ENCODE measurements at regions of chr2 and their contacts with region 1.

Region 1: DNA sequence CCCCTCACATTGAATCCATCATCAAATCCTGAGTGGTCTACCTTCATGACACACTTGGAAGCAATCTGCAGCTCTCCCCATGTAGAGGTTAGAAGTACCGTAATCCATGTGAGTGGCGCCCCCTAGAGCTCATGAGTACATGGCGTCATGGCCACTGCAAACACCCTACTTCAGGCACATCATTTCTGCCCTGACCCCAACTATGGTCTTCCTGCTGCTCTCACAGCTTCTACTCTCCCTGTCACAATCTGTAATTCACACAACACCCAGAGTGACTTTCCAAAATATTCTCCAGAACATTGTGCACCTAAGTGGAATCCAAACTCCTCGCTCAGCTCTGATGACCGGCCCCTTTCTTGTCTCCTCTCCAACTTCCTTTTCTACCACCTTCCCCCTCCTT is 141.9 kb downstream of the ANKRD44 start:
- DNase-seq: peak; percentile 82
- ATAC-seq: peak; percentile 76
- H3K4me3 ChIP-seq: no peak overlapping the region
- H3K4me3 Mint-ChIP-seq: peak overlapping the region; percentile 4
- H3K27ac ChIP-seq: peak overlapping the region; percentile 2 to 60
- H3K27ac Mint-ChIP-seq: peak overlapping the region; percentile 64
- H3K4me1 ChIP-seq: peaks cover 61 to 64% of the 10 kb centered on the region in 2 donors
- H3K4me1 Mint-ChIP-seq: peaks cover 78% of the 10 kb centered on the region
- H3K27me3 ChIP-seq: no peaks in the 10 kb centered on the region
- H3K27me3 Mint-ChIP-seq: no peaks in the 10 kb centered on the region
- CTCF ChIP-seq: peak; percentile 79

Region 2: DNA sequence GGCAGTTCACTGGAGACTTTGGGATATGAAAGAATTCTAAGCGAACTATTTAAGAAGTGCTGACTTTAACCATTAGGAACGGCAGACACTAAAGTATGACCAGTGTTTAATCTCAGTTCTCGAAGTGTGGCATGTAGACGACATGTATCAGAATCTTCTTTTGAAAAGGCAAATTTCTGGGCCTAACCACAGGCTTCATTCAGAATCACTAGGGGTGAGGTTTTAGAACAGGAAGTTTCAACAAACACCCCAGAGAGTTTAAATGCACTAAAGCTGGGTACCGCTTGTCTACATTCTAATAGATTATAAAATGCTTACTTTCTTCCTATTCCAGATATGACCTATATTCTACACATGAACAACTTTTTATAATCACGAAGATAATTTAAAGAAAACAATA is 38.4 kb before region 1 on chr2:
- CTCF ChIA-PET with region 1: interaction called, 21 read pairs
- POLR2A ChIA-PET with region 1: no interaction called
- intact Hi-C with region 1: loop called (anchors 5 kb)
- DNase-seq: peak; percentile 75
- ATAC-seq: peak; percentile 70
- H3K4me3 ChIP-seq: peak overlapping the region in 3 of 5 experiments; percentile 14 to 52 (median 21)
- H3K4me3 Mint-ChIP-seq: peak overlapping the region; percentile 84
- H3K27ac ChIP-seq: peak overlapping the region; percentile 81 to 82
- H3K27ac Mint-ChIP-seq: peak overlapping the region; percentile 96
- H3K4me1 ChIP-seq: peaks cover 66 to 69% of the 10 kb centered on the region in 2 donors
- H3K4me1 Mint-ChIP-seq: peaks cover 69% of the 10 kb centered on the region
- H3K27me3 ChIP-seq: no peaks in the 10 kb centered on the region
- H3K27me3 Mint-ChIP-seq: no peaks in the 10 kb centered on the region
- CTCF ChIP-seq: no peak

Region 3: DNA sequence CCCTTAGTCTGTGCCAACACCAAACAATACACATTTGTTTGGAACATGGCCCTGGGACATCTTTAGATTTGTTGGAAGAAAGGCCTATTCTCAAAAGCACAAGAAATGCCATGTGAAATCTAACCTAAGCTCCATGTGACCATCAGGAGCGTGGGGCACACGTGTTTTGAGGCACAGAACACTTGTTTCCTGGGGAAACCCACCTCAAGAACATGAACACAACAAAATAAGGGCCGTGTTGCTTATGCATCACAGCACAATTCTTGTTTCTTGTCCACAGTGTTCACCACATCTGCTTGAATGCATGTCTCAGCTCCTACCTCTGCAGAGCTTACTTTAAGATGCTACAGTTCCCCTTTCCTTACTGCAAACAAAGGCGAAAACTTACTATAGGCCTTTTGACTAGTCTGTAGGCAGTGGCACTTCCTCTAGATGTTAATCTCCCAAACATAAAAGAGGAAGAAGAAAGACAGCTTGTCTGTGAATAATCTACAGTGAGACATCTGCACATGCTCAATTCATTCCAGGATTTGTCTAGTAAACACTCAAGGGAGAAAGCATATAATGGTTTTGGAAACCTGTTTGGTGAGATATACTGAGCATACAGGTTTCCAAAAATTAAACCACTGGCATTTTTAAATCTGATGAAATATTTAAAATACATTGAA is 23.1 kb before region 1 on chr2:
- CTCF ChIA-PET with region 1: interaction called, 20 read pairs
- POLR2A ChIA-PET with region 1: no interaction called
- intact Hi-C with region 1: no loop called
- DNase-seq: peak; percentile 93
- ATAC-seq: peak; percentile 88
- H3K4me3 ChIP-seq: no peak overlapping the region
- H3K4me3 Mint-ChIP-seq: peak overlapping the region; percentile 76
- H3K27ac ChIP-seq: peak overlapping the region; percentile 93 to 98
- H3K27ac Mint-ChIP-seq: peak overlapping the region; percentile 99
- H3K4me1 ChIP-seq: peaks cover 87 to 88% of the 10 kb centered on the region in 2 donors
- H3K4me1 Mint-ChIP-seq: peaks cover 82% of the 10 kb centered on the region
- H3K27me3 ChIP-seq: no peaks in the 10 kb centered on the region
- H3K27me3 Mint-ChIP-seq: no peaks in the 10 kb centered on the region
- CTCF ChIP-seq: no peak

Region 4: DNA sequence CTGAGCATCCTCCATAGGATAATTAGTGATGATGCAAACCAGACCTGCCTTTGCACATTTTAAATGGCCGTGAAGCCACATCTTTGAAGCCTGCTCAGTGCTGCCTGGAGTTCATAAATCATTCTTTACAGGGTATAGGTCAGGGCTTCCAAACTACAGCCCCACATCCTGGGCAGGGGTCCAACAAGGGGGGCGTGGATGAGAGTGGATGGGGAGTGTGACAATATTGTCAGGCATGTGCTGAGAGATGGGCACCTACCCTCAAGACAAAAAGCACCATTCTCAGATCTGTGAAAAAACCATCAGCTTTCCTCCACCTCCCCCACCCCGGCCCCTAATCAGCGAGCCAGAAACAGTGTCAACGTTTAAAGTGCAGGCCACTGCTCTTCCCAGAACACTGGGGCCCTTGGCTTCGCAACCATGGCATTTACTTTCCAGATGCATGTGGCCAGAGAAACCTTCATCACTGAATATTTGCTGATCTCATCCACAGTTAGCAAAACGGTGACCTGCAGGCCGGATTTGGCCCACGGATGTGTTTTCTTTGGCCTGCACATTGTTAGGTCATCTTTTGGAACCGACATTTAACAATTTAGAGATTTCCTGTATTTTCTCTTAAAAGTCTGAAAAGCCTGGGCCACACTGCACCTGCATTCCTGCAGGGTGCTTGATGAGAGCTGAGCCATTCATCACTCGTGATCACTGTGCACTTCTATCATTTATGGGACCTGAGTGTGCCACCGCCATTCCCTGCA is 11.2 kb after region 1 on chr2:
- CTCF ChIA-PET with region 1: interaction called, 13 read pairs
- POLR2A ChIA-PET with region 1: no interaction called
- intact Hi-C with region 1: no loop called
- DNase-seq: no peak
- ATAC-seq: no peak
- H3K4me3 ChIP-seq: no peak overlapping the region
- H3K4me3 Mint-ChIP-seq: no peak overlapping the region
- H3K27ac ChIP-seq: no peak overlapping the region
- H3K27ac Mint-ChIP-seq: peak overlapping the region; percentile 38
- H3K4me1 ChIP-seq: peaks cover 23 to 32% of the 10 kb centered on the region in 2 donors
- H3K4me1 Mint-ChIP-seq: peaks cover 59% of the 10 kb centered on the region
- H3K27me3 ChIP-seq: no peaks in the 10 kb centered on the region
- H3K27me3 Mint-ChIP-seq: no peaks in the 10 kb centered on the region
- CTCF ChIP-seq: no peak

Region 5: DNA sequence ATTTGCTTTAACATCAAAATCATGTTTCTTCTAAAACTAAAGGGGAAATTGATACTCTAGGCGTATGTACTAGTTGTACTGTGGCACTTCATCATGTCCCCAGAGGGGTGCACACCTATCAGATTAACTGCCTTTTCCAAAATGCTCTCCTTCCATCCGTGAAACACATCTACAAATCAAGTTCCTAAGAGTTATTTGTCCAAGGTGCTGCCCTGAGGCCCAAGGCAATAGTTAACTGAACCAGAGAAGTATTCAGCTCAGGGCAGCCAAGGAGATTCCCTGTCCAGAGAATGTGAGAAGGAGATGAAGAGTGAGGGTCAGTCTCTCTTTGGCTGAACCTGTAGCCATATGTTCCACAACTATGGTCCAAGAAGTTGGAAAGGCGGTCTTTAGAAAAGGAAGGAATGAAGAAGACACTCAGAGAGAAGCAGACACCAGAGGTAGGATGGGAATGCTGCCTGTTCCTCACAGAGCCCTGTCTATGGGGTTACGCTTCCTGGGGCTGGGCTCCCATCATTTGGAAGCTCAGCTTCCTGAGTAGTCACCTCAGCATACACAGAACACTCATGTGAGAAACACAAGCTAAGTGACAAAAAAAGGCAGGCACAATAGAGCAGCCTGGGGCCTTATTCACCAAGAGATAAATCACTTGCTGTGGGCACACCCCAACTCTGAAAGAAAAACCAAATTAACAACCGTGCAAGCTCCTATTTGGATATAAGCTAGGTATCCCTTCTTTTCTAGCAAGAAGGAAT is 86.2 kb after region 1 on chr2:
- CTCF ChIA-PET with region 1: no interaction called
- POLR2A ChIA-PET with region 1: no interaction called
- intact Hi-C with region 1: no loop called
- DNase-seq: peak; percentile 38
- ATAC-seq: peak; percentile 35
- H3K4me3 ChIP-seq: peak overlapping the region in 1 of 5 experiments; percentile 26
- H3K4me3 Mint-ChIP-seq: peak overlapping the region; percentile 87
- H3K27ac ChIP-seq: peak overlapping the region; percentile 90 to 93
- H3K27ac Mint-ChIP-seq: peak overlapping the region; percentile 90
- H3K4me1 ChIP-seq: peaks cover 75 to 80% of the 10 kb centered on the region in 2 donors
- H3K4me1 Mint-ChIP-seq: peaks cover 77% of the 10 kb centered on the region
- H3K27me3 ChIP-seq: no peaks in the 10 kb centered on the region
- H3K27me3 Mint-ChIP-seq: no peaks in the 10 kb centered on the region
- CTCF ChIP-seq: no peak

Region 6: GRCh38 chr2:197378494-197379307 is 210.0 kb after region 1 on chr2:
- CTCF ChIA-PET with region 1: interaction called, 5 read pairs
- POLR2A ChIA-PET with region 1: no interaction called
- intact Hi-C with region 1: loop called (anchors 5 kb)
- DNase-seq: peak; percentile 73
- ATAC-seq: peak; percentile 58
- H3K4me3 ChIP-seq: no peak overlapping the region
- H3K4me3 Mint-ChIP-seq: peak overlapping the region; percentile 21
- H3K27ac ChIP-seq: no peak overlapping the region
- H3K27ac Mint-ChIP-seq: no peak overlapping the region
- H3K4me1 ChIP-seq: peaks cover 0 to 6% of the 10 kb centered on the region in 2 donors
- H3K4me1 Mint-ChIP-seq: peaks cover 17% of the 10 kb centered on the region
- H3K27me3 ChIP-seq: peaks cover 0 to 3% (median 0%) of the 10 kb centered on the region in 4 experiments
- H3K27me3 Mint-ChIP-seq: no peaks in the 10 kb centered on the region
- CTCF ChIP-seq: peak; percentile 85

Region 7: GRCh38 chr2:197453161-197453914 is 284.6 kb after region 1 on chr2 and contains the start of gene COQ10B:
- CTCF ChIA-PET with region 1: no interaction called
- POLR2A ChIA-PET with region 1: no interaction called
- intact Hi-C with region 1: no loop called
- DNase-seq: peak; percentile 99
- ATAC-seq: peak; percentile 90
- H3K4me3 ChIP-seq: peak within 1 kb of the TSS; percentile 82 to 99 (median 89)
- H3K4me3 Mint-ChIP-seq: peak within 1 kb of the TSS; percentile 99
- H3K27ac ChIP-seq: peak within 1 kb of the TSS; percentile 95 to 96
- H3K27ac Mint-ChIP-seq: peak within 1 kb of the TSS; percentile 99
- H3K4me1 ChIP-seq: peaks cover 17 to 19% of the 10 kb centered on the region in 2 donors
- H3K4me1 Mint-ChIP-seq: peaks cover 42% of the 10 kb centered on the region
- H3K27me3 ChIP-seq: no peaks in the 10 kb centered on the region
- H3K27me3 Mint-ChIP-seq: no peaks in the 10 kb centered on the region
- CTCF ChIP-seq: no peak
- total RNA-seq, gene COQ10B: 29.1 and 29.6 TPM in 2 replicates

Measured in B cell (primary cell).